Activated CD4-positive, alpha-beta memory T cell treated with anti-CD3 and anti-CD28 coated beads for 36 hours (primary cell): ENCODE measurements at regions of chr17 and their contacts with region 1.

Region 1: GRCh38 chr17:8041249-8041928 is 2.5 kb downstream of the ALOX15B start:
- DNase-seq: peak; percentile 62
- H3K4me3 Mint-ChIP-seq: no peak overlapping the region
- H3K27ac Mint-ChIP-seq: no peak overlapping the region
- H3K4me1 Mint-ChIP-seq: no peaks in the 10 kb centered on the region
- H3K27me3 Mint-ChIP-seq: peaks cover 22% of the 10 kb centered on the region

Region 2: GRCh38 chr17:7745748-7746470 is 295.5 kb before region 1 on chr17:
- CTCF ChIA-PET with region 1: interaction called, 18 read pairs
- POLR2A ChIA-PET with region 1: no interaction called
- intact Hi-C with region 1: no loop called
- DNase-seq: no peak
- H3K4me3 Mint-ChIP-seq: no peak overlapping the region
- H3K27ac Mint-ChIP-seq: no peak overlapping the region
- H3K4me1 Mint-ChIP-seq: no peaks in the 10 kb centered on the region
- H3K27me3 Mint-ChIP-seq: peaks cover 3% of the 10 kb centered on the region

Region 3: DNA sequence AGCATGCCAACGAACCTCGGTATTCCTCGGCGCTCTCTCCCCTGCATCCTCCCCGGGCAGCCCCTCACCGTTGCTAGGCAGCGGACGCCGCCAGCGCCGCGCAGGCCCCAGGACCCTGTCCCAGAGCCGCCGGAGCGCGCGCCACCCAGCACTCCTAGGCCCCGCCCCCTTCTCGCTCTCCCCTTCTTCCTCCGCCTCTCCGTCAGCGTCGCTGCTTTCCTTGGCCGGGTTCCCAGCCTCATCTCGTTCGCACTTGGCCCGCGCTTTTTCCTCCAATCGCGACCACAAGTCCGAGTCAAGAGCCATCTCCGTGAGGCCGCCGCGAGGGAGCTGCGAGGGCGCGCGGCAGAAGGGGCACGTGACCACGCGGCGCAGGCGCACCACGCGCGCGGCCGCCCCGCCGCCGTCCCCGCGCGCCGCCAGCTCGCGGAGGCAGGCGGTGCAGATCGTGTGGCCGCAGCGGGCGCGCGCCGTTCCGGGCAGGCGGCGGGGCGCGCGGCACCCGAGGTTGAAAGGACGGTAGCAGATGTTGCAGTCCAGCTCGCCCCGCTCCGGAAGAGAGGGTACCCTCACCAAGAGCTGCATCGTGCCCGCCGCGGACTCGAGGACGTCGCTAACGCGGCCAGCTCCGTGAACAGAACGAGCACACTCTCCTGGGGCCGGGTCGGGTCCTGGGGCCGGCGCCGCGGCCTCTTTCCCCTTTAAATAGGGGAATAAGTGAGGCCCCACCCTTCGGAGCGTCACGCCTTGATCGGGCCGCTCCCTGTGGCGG is 125.6 kb before region 1 on chr17 and contains the start of gene RNF227:
- CTCF ChIA-PET with region 1: interaction called, 23 read pairs
- POLR2A ChIA-PET with region 1: no interaction called
- intact Hi-C with region 1: no loop called
- DNase-seq: peak; percentile 92
- H3K4me3 Mint-ChIP-seq: peak within 1 kb of the TSS; percentile 85
- H3K27ac Mint-ChIP-seq: peak within 1 kb of the TSS; percentile 86
- H3K4me1 Mint-ChIP-seq: peaks cover 29% of the 10 kb centered on the region
- H3K27me3 Mint-ChIP-seq: no peaks in the 10 kb centered on the region
- total RNA-seq, gene RNF227: 2.7 to 3.3 TPM

Region 4: GRCh38 chr17:8016632-8017478 is 24.5 kb before region 1 on chr17:
- CTCF ChIA-PET with region 1: interaction called, 25 read pairs
- POLR2A ChIA-PET with region 1: no interaction called
- intact Hi-C with region 1: loop called (anchors 1 kb)
- DNase-seq: peak; percentile 76
- H3K4me3 Mint-ChIP-seq: peak overlapping the region; percentile 62
- H3K27ac Mint-ChIP-seq: no peak overlapping the region
- H3K4me1 Mint-ChIP-seq: peaks cover 12% of the 10 kb centered on the region
- H3K27me3 Mint-ChIP-seq: peaks cover 8% of the 10 kb centered on the region

Region 5: GRCh38 chr17:8022360-8023003 is 18.9 kb before region 1 on chr17:
- CTCF ChIA-PET with region 1: interaction called, 25 read pairs
- POLR2A ChIA-PET with region 1: no interaction called
- intact Hi-C with region 1: no loop called
- DNase-seq: no peak
- H3K4me3 Mint-ChIP-seq: no peak overlapping the region
- H3K27ac Mint-ChIP-seq: no peak overlapping the region
- H3K4me1 Mint-ChIP-seq: peaks cover 4% of the 10 kb centered on the region
- H3K27me3 Mint-ChIP-seq: peaks cover 11% of the 10 kb centered on the region

Region 6: GRCh38 chr17:8073627-8074484 is 32.5 kb after region 1 on chr17:
- CTCF ChIA-PET with region 1: interaction called, 13 read pairs
- POLR2A ChIA-PET with region 1: no interaction called
- intact Hi-C with region 1: no loop called
- DNase-seq: peak; percentile 91
- H3K4me3 Mint-ChIP-seq: peak overlapping the region; percentile 70
- H3K27ac Mint-ChIP-seq: no peak overlapping the region
- H3K4me1 Mint-ChIP-seq: peaks cover 18% of the 10 kb centered on the region
- H3K27me3 Mint-ChIP-seq: peaks cover 40% of the 10 kb centered on the region